Posterior vena cava (tissue), 2 donors: ENCODE measurements at regions of chr10 and their contacts with region 1.

Region 1: GRCh38 chr10:130782467-130782866 is 529.1 kb downstream of the TCERG1L start:
- DNase-seq: no peak

Region 2: DNA sequence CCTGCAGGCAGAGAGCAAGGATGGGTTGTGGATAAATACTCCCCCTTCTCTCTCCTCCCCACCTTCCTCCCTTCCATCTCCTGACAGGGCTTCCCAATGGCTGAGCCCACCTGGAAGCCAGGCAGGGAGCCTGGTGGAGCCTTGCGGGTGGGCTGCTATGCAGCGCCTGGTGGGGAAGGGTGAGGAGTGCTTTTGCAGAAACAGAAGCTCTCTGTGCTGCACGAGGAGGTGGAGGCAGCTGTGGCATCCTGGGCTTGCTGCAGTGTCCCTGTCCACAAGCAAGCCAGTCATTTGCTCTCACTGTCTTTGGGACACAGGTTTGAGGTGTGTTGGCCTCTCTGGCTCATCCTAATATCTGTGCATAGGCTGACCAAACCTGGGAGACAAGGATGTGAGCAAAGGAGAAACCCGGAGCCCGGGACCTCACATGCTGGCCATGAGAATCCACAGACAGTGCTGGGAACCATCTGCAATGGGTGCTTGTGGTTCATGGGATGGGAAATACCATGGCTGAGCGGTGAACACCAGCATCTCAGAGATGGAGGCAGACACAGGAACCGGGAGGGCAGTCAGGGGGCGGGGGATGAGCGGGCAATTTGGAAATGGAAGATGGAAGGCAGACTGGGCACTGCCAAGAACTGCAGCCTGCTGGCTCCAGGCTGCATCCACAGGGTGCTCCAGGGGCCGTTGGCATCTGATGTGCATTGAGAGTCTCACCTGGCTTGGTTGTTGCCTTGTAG is 282.0 kb before region 1 on chr10:
- intact Hi-C with region 1: no loop called
- DNase-seq: peak; percentile 69

Region 3: DNA sequence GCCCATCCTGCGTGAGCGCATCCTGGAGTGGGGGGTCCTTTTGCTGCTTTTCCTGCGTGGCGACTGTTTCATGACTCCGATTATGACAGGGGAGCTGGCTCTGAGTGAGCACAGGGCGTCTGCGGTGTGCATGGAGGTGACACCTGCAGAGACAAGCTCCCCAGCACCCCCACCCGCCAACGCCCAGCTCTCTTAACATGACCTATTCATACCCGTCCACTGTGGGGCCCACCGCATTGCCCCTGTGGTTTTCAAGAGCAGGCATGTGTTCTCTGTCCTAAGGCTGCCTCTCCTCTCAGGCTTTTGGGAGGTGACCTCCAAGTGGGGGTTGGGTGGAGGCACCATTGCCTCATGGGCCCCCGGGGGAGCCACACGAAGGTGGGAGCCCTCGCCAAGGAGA is 28.4 kb after region 1 on chr10:
- intact Hi-C with region 1: loop called in 1 of 2 experiments (anchors 1 kb)
- DNase-seq: peak; percentile 73